ENCODE measurements at regions of chr6 and their contacts with region 1.

Region 1: GRCh38 chr6:165662749-165663282 is at the start of gene PDE10A:
- DNase-seq: peak; percentile 55
- ATAC-seq: peak; percentile 76
- H3K4me3 ChIP-seq: peak within 1 kb of the TSS; percentile 75
- H3K27ac ChIP-seq: peak within 1 kb of the TSS; percentile 65
- H3K4me1 ChIP-seq: peaks cover 11% of the 10 kb centered on the region
- H3K27me3 ChIP-seq: peaks cover 3% of the 10 kb centered on the region
- CTCF ChIP-seq: no peak
- POLR2A ChIP-seq: 0 out of 2 replicates have a peak, but pooled peaks have one; percentile 33
- RAD21 ChIP-seq: no peak
- total RNA-seq, gene PDE10A: 12.4 and 15.8 TPM in 2 replicates

Region 2: GRCh38 chr6:165439928-165440554 is 222.8 kb before region 1 on chr6:
- CTCF ChIA-PET with region 1: no interaction called
- POLR2A ChIA-PET with region 1: no interaction called
- dilution Hi-C with region 1: no loop called
- in situ Hi-C with region 1: no loop called
- intact Hi-C with region 1: loop called (anchors 1 kb)
- DNase-seq: peak; percentile 73
- ATAC-seq: peak; percentile 65
- H3K4me3 ChIP-seq: no peak overlapping the region
- H3K27ac ChIP-seq: no peak overlapping the region
- H3K4me1 ChIP-seq: no peaks in the 10 kb centered on the region
- H3K27me3 ChIP-seq: no peaks in the 10 kb centered on the region
- CTCF ChIP-seq: peak; percentile 65
- POLR2A ChIP-seq: no peak
- RAD21 ChIP-seq: peak; percentile 68

Region 3: GRCh38 chr6:165621940-165622339 is 40.9 kb before region 1 on chr6:
- CTCF ChIA-PET with region 1: no interaction called
- POLR2A ChIA-PET with region 1: no interaction called
- dilution Hi-C with region 1: no loop called
- in situ Hi-C with region 1: no loop called
- intact Hi-C with region 1: no loop called
- DNase-seq: no peak
- ATAC-seq: no peak
- H3K4me3 ChIP-seq: no peak overlapping the region
- H3K27ac ChIP-seq: no peak overlapping the region
- H3K4me1 ChIP-seq: no peaks in the 10 kb centered on the region
- H3K27me3 ChIP-seq: no peaks in the 10 kb centered on the region
- CTCF ChIP-seq: no peak
- POLR2A ChIP-seq: no peak
- RAD21 ChIP-seq: no peak

Region 4: GRCh38 chr6:165636402-165637048 is 26.3 kb before region 1 on chr6:
- CTCF ChIA-PET with region 1: interaction called, 4 read pairs
- POLR2A ChIA-PET with region 1: interaction called, 7 read pairs
- dilution Hi-C with region 1: no loop called
- in situ Hi-C with region 1: no loop called
- intact Hi-C with region 1: loop called (anchors 2 kb)
- DNase-seq: peak; percentile 64
- ATAC-seq: peak; percentile 64
- H3K4me3 ChIP-seq: no peak overlapping the region
- H3K27ac ChIP-seq: peak overlapping the region; percentile 26; the same call in 1 of the 2 replicates
- H3K4me1 ChIP-seq: peaks cover 17% of the 10 kb centered on the region
- H3K27me3 ChIP-seq: no peaks in the 10 kb centered on the region
- CTCF ChIP-seq: no peak
- POLR2A ChIP-seq: no peak
- RAD21 ChIP-seq: no peak

Region 5: DNA sequence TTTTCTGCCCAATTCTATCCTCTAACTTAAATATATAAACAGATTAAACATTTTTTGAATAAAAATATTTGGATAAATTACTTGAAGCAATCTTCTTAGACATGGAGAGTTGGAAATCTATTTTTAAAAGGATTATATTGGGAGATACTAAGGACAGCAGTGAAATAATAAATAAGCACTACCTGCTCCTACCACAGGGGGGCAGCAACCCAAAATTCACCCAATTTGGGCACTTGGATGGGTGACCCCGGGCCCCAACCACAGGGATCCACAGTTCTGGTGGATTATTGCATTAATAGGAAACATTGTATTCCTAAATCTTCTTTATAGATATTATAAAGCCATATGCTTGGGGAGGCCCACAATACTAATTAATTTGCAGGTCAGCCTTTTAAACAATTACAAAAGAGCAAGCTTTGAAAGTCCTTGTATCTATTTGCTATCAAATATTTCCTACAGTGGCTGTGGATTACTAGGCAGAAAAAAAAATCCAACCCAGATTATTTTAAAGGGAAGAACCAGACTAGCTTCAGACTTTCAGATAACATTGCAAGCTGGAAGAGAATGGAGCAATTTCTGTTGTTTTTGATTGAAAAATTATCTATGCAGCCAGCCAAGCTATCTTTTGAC is 66.6 kb after region 1 on chr6:
- CTCF ChIA-PET with region 1: no interaction called
- POLR2A ChIA-PET with region 1: no interaction called
- dilution Hi-C with region 1: no loop called
- in situ Hi-C with region 1: no loop called
- intact Hi-C with region 1: loop called (anchors 2 kb)
- DNase-seq: peak; percentile 10
- ATAC-seq: peak; percentile 71
- H3K4me3 ChIP-seq: no peak overlapping the region
- H3K27ac ChIP-seq: no peak overlapping the region
- H3K4me1 ChIP-seq: 0 out of 2 replicates have a peak, but pooled peaks cover 2% of the 10 kb centered on the region
- H3K27me3 ChIP-seq: peaks cover 10% of the 10 kb centered on the region
- CTCF ChIP-seq: peak; percentile 60
- POLR2A ChIP-seq: no peak
- RAD21 ChIP-seq: peak; percentile 38; the same call in 1 of the 2 replicates

Region 6: DNA sequence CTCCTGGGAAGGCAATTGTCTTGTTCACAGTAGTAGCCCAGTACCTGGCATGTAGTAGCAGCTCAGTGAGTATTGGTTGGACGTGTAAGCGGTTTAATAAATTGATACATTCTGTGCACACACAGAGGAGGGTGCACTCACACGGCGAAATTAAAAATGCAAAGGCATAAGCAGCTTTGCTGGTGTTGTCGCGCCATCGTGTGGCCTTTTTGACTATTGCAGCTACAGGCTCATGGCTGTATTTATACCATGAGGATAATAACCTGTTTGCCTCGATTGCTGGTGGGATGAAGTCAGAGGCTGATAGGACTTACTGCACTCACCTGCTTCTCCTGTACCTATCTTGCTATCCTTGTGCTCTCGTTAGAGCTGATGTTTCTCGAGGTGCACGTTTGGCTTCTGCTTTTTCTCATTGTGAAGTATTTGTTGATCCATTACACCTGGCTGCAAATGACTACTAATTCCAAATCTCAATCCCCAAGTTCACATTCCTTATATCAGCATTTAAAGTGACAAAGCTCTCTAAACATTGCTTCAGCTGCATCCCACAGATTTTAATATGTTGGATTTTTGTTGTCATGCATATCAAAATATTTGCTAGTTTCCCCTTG is 443.4 kb after region 1 on chr6:
- CTCF ChIA-PET with region 1: no interaction called
- POLR2A ChIA-PET with region 1: no interaction called
- dilution Hi-C with region 1: no loop called
- in situ Hi-C with region 1: no loop called
- intact Hi-C with region 1: loop called (anchors 10 kb)
- DNase-seq: peak; percentile 71
- ATAC-seq: peak; percentile 94
- H3K4me3 ChIP-seq: no peak overlapping the region
- H3K27ac ChIP-seq: no peak overlapping the region
- H3K4me1 ChIP-seq: no peaks in the 10 kb centered on the region
- H3K27me3 ChIP-seq: peaks cover 6% of the 10 kb centered on the region; the same call in 1 of the 2 replicates
- CTCF ChIP-seq: peak; percentile 98
- POLR2A ChIP-seq: peak; percentile 60
- RAD21 ChIP-seq: peak; percentile 99

Region 7: GRCh38 chr6:166848979-166849748 is 1186.3 kb after region 1 on chr6:
- CTCF ChIA-PET with region 1: no interaction called
- POLR2A ChIA-PET with region 1: no interaction called
- dilution Hi-C with region 1: no loop called
- in situ Hi-C with region 1: no loop called
- intact Hi-C with region 1: no loop called
- DNase-seq: no peak
- ATAC-seq: no peak
- H3K4me3 ChIP-seq: no peak overlapping the region
- H3K27ac ChIP-seq: no peak overlapping the region
- H3K4me1 ChIP-seq: no peaks in the 10 kb centered on the region
- H3K27me3 ChIP-seq: no peaks in the 10 kb centered on the region
- CTCF ChIP-seq: no peak
- POLR2A ChIP-seq: no peak
- RAD21 ChIP-seq: no peak